CD8-positive, alpha-beta T cell (primary cell): ENCODE measurements at regions of chr1 and their contacts with region 1.

Region 1: GRCh38 chr1:191585095-191585494 is 573.2 kb upstream of the RGS18 start:
- DNase-seq: no peak
- ATAC-seq: no peak
- H3K4me3 ChIP-seq: no peak overlapping the region
- H3K4me3 Mint-ChIP-seq: no peak overlapping the region
- H3K27ac ChIP-seq: no peak overlapping the region
- H3K27ac Mint-ChIP-seq: no peak overlapping the region
- H3K4me1 ChIP-seq: no peaks in the 10 kb centered on the region
- H3K4me1 Mint-ChIP-seq: no peaks in the 10 kb centered on the region
- H3K27me3 ChIP-seq: no peaks in the 10 kb centered on the region
- H3K27me3 Mint-ChIP-seq: no peaks in the 10 kb centered on the region
- CTCF ChIP-seq: no peak

Region 2: DNA sequence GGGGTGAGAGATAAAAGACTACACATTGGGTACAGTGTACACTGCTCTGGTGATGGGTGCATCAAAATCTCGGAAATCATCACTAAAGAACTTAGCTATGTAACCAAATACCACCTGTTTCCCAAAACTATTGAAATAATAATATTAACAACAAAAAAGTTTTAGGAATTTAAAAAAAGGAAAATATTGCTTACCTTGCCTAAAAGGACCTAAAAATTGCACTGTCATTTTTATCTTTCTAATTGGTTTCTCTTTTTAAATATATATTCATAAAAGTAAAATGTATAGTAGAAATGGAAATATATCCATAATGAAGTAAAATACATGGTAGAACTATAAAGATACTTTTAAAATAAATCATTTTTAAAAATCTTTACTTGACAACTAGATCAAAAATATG is 146.1 kb before region 1 on chr1:
- CTCF ChIA-PET with region 1: no interaction called
- POLR2A ChIA-PET with region 1: no interaction called
- intact Hi-C with region 1: no loop called
- DNase-seq: no peak
- ATAC-seq: no peak
- H3K4me3 ChIP-seq: no peak overlapping the region
- H3K4me3 Mint-ChIP-seq: no peak overlapping the region
- H3K27ac ChIP-seq: no peak overlapping the region
- H3K27ac Mint-ChIP-seq: no peak overlapping the region
- H3K4me1 ChIP-seq: no peaks in the 10 kb centered on the region
- H3K4me1 Mint-ChIP-seq: no peaks in the 10 kb centered on the region
- H3K27me3 ChIP-seq: no peaks in the 10 kb centered on the region
- H3K27me3 Mint-ChIP-seq: no peaks in the 10 kb centered on the region
- CTCF ChIP-seq: no peak

Region 3: DNA sequence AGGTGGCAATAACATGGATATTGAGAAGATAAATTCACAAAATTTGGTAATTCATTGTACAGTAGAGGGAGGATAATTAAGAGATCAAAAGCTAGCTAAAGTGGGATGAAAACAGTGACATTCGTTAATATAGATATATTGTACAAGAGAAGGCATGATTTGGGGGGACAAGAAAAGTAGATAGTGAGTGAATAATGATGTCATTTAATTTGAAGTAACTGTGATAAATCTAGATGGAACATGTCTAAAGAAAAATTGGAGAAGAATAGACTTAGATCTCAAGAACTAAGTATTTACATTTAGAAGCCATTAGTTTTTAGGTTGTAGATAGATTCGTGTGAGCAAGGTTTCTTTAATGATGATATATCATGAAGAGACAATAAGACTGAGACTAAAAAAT is 20.8 kb before region 1 on chr1:
- CTCF ChIA-PET with region 1: no interaction called
- POLR2A ChIA-PET with region 1: no interaction called
- intact Hi-C with region 1: loop called in 1 of 2 experiments (anchors 2 kb)
- DNase-seq: no peak
- ATAC-seq: no peak
- H3K4me3 ChIP-seq: no peak overlapping the region
- H3K4me3 Mint-ChIP-seq: no peak overlapping the region
- H3K27ac ChIP-seq: no peak overlapping the region
- H3K27ac Mint-ChIP-seq: no peak overlapping the region
- H3K4me1 ChIP-seq: no peaks in the 10 kb centered on the region
- H3K4me1 Mint-ChIP-seq: no peaks in the 10 kb centered on the region
- H3K27me3 ChIP-seq: no peaks in the 10 kb centered on the region
- H3K27me3 Mint-ChIP-seq: no peaks in the 10 kb centered on the region
- CTCF ChIP-seq: no peak

Region 4: DNA sequence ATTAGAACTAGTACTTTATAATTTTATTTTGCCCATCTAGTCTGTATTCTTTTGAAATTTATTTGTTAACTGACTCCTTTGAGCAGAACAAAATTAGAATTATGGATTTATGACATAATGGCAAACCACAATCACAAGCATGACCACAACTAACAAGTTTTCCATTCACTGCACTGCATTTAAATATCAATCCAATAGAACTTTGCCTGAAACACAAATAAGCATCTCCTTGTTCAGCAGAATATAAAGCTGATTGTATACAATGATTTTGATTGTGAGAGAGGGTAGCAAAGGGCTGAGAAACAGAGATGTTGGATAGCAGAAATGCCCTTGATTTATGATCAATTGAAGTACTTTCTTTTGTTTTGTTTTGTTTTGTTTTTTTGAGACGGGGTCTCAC is 77.7 kb after region 1 on chr1:
- CTCF ChIA-PET with region 1: no interaction called
- POLR2A ChIA-PET with region 1: no interaction called
- intact Hi-C with region 1: no loop called
- DNase-seq: no peak
- ATAC-seq: no peak
- H3K4me3 ChIP-seq: no peak overlapping the region
- H3K4me3 Mint-ChIP-seq: no peak overlapping the region
- H3K27ac ChIP-seq: no peak overlapping the region
- H3K27ac Mint-ChIP-seq: no peak overlapping the region
- H3K4me1 ChIP-seq: no peaks in the 10 kb centered on the region
- H3K4me1 Mint-ChIP-seq: no peaks in the 10 kb centered on the region
- H3K27me3 ChIP-seq: no peaks in the 10 kb centered on the region
- H3K27me3 Mint-ChIP-seq: no peaks in the 10 kb centered on the region
- CTCF ChIP-seq: no peak